Sigmoid colon (tissue), 7 donors: ENCODE measurements at regions of chr15 and their contacts with region 1.

Region 1: DNA sequence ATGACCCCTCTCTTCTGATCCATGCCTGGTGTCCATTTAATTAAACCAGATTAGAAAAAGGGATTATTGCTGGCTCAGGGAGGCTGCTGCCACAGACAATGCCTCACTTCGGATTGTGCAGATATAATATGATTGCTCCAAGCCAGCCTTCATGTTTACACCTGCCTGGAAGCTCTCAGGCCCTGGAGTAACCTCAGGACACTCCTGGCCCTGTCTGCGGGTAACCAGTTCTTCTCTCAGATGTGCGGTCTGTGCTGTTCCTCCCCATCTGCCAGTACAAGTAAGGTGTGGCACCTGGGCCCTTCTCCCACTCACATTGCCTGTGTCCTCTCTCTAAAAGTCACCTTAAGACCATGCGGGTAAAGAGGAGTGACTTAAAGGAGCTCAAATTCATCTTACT is 8.8 kb upstream of the GOLGA8J start:
- DNase-seq: no peak
- H3K4me3 ChIP-seq: no peak overlapping the region
- H3K27ac ChIP-seq: no peak overlapping the region
- H3K4me1 ChIP-seq: no peaks in the 10 kb centered on the region
- H3K27me3 ChIP-seq: no peaks in the 10 kb centered on the region
- CTCF ChIP-seq: no peak
- EP300 ChIP-seq: no peak
- POLR2A ChIP-seq: no peak

Region 2: GRCh38 chr15:29747837-29748417 is 326.0 kb before region 1 on chr15:
- intact Hi-C with region 1: loop called (anchors 10 kb)
- DNase-seq: no peak
- H3K4me3 ChIP-seq: no peak overlapping the region
- H3K27ac ChIP-seq: no peak overlapping the region
- H3K4me1 ChIP-seq: peaks cover 0 to 24% (median 3%) of the 10 kb centered on the region in 4 donors
- H3K27me3 ChIP-seq: no peaks in the 10 kb centered on the region
- CTCF ChIP-seq: peak in 3 of 4 experiments; percentile 14 to 42 (median 31)
- EP300 ChIP-seq: no peak
- POLR2A ChIP-seq: no peak

Region 3: GRCh38 chr15:29942143-29942542 is 131.8 kb before region 1 on chr15:
- intact Hi-C with region 1: loop called (anchors 10 kb)
- DNase-seq: no peak
- H3K4me3 ChIP-seq: no peak overlapping the region
- H3K27ac ChIP-seq: no peak overlapping the region
- H3K4me1 ChIP-seq: no peaks in the 10 kb centered on the region
- H3K27me3 ChIP-seq: no peaks in the 10 kb centered on the region
- CTCF ChIP-seq: peak in 1 of 4 experiments; percentile 25
- EP300 ChIP-seq: no peak
- POLR2A ChIP-seq: no peak

Region 4: DNA sequence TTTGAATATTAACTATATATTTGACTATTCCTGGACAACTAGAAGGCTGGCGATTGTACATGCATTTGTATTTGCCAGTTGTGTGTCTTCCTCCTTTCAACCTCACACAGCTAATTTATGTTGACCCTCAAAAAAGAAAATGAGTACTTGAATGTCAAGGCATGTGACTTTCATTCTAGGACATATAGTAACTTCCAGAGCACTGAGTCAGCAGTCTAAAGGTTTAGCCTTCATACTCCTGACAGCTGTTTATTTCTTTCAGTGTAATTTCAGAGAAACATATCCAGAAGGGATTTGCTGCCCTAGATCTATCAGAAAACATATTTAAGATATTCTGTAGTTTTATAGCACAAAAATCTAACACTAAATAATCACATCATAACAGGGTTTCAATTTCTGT is 65.8 kb before region 1 on chr15:
- intact Hi-C with region 1: no loop called
- DNase-seq: no peak
- H3K4me3 ChIP-seq: no peak overlapping the region
- H3K27ac ChIP-seq: no peak overlapping the region
- H3K4me1 ChIP-seq: no peaks in the 10 kb centered on the region
- H3K27me3 ChIP-seq: no peaks in the 10 kb centered on the region
- CTCF ChIP-seq: no peak
- EP300 ChIP-seq: no peak
- POLR2A ChIP-seq: no peak